Calu3 (cell line): ENCODE measurements at regions of chr16 and their contacts with region 1.

Region 1: DNA sequence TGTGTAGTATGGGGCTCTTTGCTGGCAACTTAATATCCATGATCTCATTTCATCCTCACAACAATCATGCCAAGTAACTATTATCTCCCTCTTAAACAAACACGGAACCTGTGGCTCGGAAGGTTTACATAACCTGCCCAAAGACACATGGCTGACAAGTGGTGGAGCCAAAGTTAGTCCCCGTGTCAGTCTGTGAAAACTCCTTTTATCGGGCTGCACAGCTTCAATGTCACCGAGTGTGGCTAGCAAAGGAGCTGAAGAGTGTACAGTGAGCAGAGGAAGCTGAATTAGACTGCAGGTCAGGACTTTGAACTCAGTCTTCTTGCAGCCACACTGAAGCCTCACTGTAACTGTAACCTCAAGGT is 80.3 kb downstream of the PARN start:
- DNase-seq: peak; percentile 30
- H3K4me3 Mint-ChIP-seq: peak overlapping the region; percentile 44
- H3K27ac Mint-ChIP-seq: peak overlapping the region; percentile 64
- H3K4me1 Mint-ChIP-seq: peaks cover 51% of the 10 kb centered on the region
- H3K27me3 Mint-ChIP-seq: no peaks in the 10 kb centered on the region
- CTCF ChIP-seq: no peak

Region 2: DNA sequence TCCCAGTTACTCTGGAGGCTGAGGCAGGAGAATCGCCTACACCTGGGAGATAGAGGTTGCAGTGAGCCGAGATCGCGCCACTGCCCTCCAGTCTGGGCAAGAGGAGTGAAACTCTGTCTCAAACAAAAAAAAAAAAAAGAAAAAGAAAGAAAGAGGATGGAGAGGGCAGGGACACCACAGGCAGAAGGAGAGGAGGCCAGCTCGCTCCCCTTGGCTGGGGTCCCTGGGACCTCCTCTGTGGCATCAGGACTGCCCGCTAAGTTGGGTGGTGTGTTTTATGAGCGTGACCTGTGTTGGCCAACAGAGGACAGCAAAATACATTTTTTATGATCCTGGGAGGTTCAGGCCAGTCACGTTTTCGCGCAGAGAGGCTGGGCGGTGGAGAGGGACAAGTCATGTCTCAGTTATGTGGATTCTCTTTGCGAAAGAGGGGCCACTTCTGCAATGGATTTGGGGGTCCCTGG is 249.0 kb before region 1 on chr16:
- CTCF ChIA-PET with region 1: interaction called, 4 read pairs
- intact Hi-C with region 1: loop called (anchors 5 kb)
- DNase-seq: peak; percentile 76
- H3K4me3 Mint-ChIP-seq: peak overlapping the region; percentile 82
- H3K27ac Mint-ChIP-seq: peak overlapping the region; percentile 76
- H3K4me1 Mint-ChIP-seq: peaks cover 15% of the 10 kb centered on the region
- H3K27me3 Mint-ChIP-seq: no peaks in the 10 kb centered on the region
- CTCF ChIP-seq: peak; percentile 62

Region 3: GRCh38 chr16:14501331-14502255 is 48.2 kb before region 1 on chr16:
- CTCF ChIA-PET with region 1: no interaction called
- intact Hi-C with region 1: no loop called
- DNase-seq: peak; percentile 67
- H3K4me3 Mint-ChIP-seq: no peak overlapping the region
- H3K27ac Mint-ChIP-seq: peak overlapping the region; percentile 27
- H3K4me1 Mint-ChIP-seq: peaks cover 42% of the 10 kb centered on the region
- H3K27me3 Mint-ChIP-seq: no peaks in the 10 kb centered on the region
- CTCF ChIP-seq: no peak

Region 4: GRCh38 chr16:14564861-14565687 is 15.3 kb after region 1 on chr16:
- CTCF ChIA-PET with region 1: interaction called, 4 read pairs
- intact Hi-C with region 1: loop called (anchors 2 kb)
- DNase-seq: no peak
- H3K4me3 Mint-ChIP-seq: no peak overlapping the region
- H3K27ac Mint-ChIP-seq: peak overlapping the region; percentile 47
- H3K4me1 Mint-ChIP-seq: peaks cover 43% of the 10 kb centered on the region
- H3K27me3 Mint-ChIP-seq: no peaks in the 10 kb centered on the region
- CTCF ChIP-seq: no peak

Region 5: DNA sequence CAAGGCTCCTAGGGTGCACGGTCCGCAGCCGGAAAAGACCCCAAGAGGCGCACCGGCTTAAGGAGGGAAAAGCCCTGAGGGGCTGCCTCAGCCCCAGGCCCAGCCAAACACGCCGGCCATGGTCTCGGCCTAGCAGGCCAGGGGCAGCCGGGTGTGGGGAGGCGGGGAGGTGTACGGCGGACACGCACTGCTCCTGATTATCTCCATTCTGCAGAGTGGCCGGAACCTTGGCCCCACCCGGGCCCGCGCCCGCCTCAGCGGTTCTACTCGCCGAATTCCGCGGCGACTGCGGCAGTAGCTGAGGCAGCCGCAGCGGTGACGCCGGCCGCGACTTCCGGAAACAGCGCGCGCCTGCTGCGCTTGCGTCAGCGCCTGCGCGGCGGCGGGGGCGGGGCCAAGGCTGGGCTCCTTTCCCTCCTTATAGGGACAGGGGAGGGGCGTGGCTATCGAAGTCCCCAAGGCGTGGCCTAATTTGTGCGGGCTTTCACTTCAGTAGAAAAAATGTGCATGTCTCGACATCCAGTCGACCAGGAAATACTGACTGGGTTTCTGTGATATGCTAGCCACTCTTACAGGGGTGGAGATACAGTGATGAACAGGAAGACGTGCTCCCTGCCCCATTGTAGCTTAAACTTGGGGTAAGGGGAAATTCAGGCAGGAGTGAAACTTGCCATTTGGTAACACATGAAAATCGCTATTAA is 80.3 kb after region 1 on chr16 and contains the start of gene PARN:
- CTCF ChIA-PET with region 1: no interaction called
- intact Hi-C with region 1: loop called (anchors 5 kb)
- DNase-seq: peak; percentile 99
- H3K4me3 Mint-ChIP-seq: peak within 1 kb of the TSS; percentile 83
- H3K27ac Mint-ChIP-seq: peak within 1 kb of the TSS; percentile 83
- H3K4me1 Mint-ChIP-seq: peaks cover 33% of the 10 kb centered on the region
- H3K27me3 Mint-ChIP-seq: no peaks in the 10 kb centered on the region
- CTCF ChIP-seq: no peak
- total RNA-seq, gene PARN: 54.8 and 59.1 TPM in 2 replicates